ENCODE measurements at regions of chr15 and their contacts with region 1.

Region 1: DNA sequence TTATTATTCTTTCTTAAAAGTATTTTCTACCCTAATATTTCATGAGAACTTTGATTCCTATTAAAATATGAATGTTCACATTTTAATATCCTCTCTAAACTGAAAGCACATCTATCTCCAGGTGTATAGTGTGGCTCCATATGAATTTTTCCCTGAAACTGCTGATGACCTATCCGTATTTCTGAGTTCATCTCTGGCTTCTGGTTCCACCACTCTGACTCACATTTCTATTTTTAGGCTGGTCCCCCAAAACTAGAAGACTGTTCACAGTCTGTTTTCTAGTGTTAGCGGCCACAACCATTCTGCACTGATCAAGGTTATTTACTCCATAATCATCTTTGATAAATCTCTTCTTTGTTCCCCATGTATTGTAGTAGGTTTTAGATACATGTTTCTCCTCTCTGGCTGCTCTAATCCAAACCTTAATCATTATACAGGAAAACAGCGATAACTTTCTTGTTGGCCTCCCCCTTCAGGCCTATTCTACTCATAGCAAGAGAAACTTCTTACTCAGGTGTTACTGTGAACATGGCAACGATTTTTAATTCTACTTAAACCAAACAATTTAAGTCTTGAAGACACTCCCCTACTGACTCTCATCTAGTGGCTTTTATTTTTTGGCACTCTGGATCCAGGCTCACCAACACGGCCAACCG is 12.8 kb downstream of the ADPGK start:
- DNase-seq: no peak
- ATAC-seq: peak in 1 of 4 experiments; percentile 35
- H3K4me3 ChIP-seq: no peak overlapping the region
- H3K4me3 Mint-ChIP-seq: no peak overlapping the region
- H3K27ac ChIP-seq: no peak overlapping the region
- H3K27ac Mint-ChIP-seq: no peak overlapping the region
- H3K4me1 ChIP-seq: peaks cover 0 to 3% of the 10 kb centered on the region in 2 experiments
- H3K4me1 Mint-ChIP-seq: peaks cover 18 to 23% (median 21%) of the 10 kb centered on the region in 3 donors
- H3K27me3 ChIP-seq: no peaks in the 10 kb centered on the region
- H3K27me3 Mint-ChIP-seq: no peaks in the 10 kb centered on the region

Region 2: DNA sequence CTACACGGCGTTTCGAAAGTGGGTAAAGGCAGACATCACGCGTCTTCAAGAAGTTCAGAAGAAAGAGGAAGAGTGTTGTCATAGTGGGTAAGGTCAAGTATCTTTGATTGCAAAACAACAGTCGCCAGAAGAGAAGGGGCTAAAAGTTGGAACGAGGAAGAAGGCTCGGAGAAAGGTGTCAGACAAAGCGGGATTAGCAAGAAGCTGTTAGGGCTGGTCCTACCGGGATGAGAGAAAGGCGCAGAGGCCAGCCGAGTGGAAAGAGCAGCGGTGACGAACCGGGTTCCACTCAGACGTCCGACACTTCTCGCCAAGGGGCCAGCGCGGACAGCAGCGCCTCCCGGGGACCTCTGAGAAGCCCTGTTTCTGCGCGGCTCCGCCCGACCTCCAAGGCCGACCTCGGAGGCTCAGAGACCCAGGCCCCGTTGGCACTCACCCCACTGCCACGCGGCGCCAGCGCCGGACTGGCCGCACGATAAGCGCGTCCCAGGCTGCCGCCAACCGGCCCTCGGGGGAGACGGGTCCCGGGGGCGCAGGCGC is 12.3 kb after region 1 on chr15:
- CTCF ChIA-PET with region 1: no interaction called
- POLR2A ChIA-PET with region 1: interaction called in 1 of 2 experiments, 22 read pairs
- DNase-seq: peak in 28 of 35 experiments; percentile 4 to 64 (median 26)
- ATAC-seq: peak; percentile 6 to 21 (median 10)
- H3K4me3 ChIP-seq: peak overlapping the region; percentile 90 to 95
- H3K4me3 Mint-ChIP-seq: peak overlapping the region; percentile 86 to 94 (median 91)
- H3K27ac ChIP-seq: peak overlapping the region; percentile 88
- H3K27ac Mint-ChIP-seq: peak overlapping the region; percentile 92 to 93
- H3K4me1 ChIP-seq: peaks cover 15 to 47% of the 10 kb centered on the region in 2 experiments
- H3K4me1 Mint-ChIP-seq: peaks cover 58 to 86% (median 63%) of the 10 kb centered on the region in 3 donors
- H3K27me3 ChIP-seq: no peaks in the 10 kb centered on the region
- H3K27me3 Mint-ChIP-seq: no peaks in the 10 kb centered on the region

Region 3: DNA sequence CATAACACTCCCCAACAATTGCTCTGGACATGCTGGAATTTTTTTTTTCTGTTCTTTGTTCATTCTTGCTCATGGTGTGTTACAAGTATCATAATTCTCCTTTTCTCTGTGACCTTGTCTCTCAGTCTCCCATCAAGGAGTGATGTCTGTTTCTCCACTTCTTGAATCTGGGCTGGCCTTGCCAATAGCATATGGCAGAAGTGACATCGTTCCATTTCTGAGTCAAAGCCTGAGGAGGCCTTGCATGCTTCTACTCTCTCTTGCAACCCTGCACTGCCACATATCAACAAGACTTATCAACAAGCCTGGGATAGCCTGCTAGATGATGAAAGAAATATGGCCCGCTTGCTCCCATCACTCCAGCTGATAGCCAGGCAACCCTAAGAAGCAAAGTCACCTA is 21.6 kb after region 1 on chr15:
- CTCF ChIA-PET with region 1: interaction called, 3 to 11 read pairs
- POLR2A ChIA-PET with region 1: no interaction called
- DNase-seq: no peak
- ATAC-seq: no peak
- H3K4me3 ChIP-seq: no peak overlapping the region
- H3K4me3 Mint-ChIP-seq: no peak overlapping the region
- H3K27ac ChIP-seq: no peak overlapping the region
- H3K27ac Mint-ChIP-seq: no peak overlapping the region
- H3K4me1 ChIP-seq: peaks cover 0 to 10% of the 10 kb centered on the region in 2 experiments
- H3K4me1 Mint-ChIP-seq: peaks cover 9 to 17% (median 10%) of the 10 kb centered on the region in 3 donors
- H3K27me3 ChIP-seq: peaks cover 3 to 10% of the 10 kb centered on the region in 2 experiments
- H3K27me3 Mint-ChIP-seq: peaks cover 4 to 8% of the 10 kb centered on the region in 2 donors

Region 4: GRCh38 chr15:72827226-72827625 is 56.4 kb after region 1 on chr15:
- CTCF ChIA-PET with region 1: no interaction called
- POLR2A ChIA-PET with region 1: no interaction called
- DNase-seq: no peak
- ATAC-seq: no peak
- H3K4me3 ChIP-seq: no peak overlapping the region
- H3K4me3 Mint-ChIP-seq: no peak overlapping the region
- H3K27ac ChIP-seq: no peak overlapping the region
- H3K27ac Mint-ChIP-seq: no peak overlapping the region
- H3K4me1 ChIP-seq: no peaks in the 10 kb centered on the region
- H3K4me1 Mint-ChIP-seq: no peaks in the 10 kb centered on the region
- H3K27me3 ChIP-seq: peaks cover 0 to 12% of the 10 kb centered on the region in 2 experiments
- H3K27me3 Mint-ChIP-seq: peaks cover 18 to 31% of the 10 kb centered on the region in 2 donors

Measured in T-cell (primary cell).